Activated CD8-positive, alpha-beta T cell treated with anti-CD3 and anti-CD28 coated beads, Interleukin-2, amount 10 ng/mL, durations not matched to agents 7 days and 5 days (primary cell): ENCODE measurements at regions of chr1 and their contacts with region 1.

Region 1: GRCh38 chr1:223712194-223712849 is at the start of gene CAPN2:
- DNase-seq: peak; percentile 65
- ATAC-seq: peak; percentile 63
- H3K4me3 Mint-ChIP-seq: peak within 1 kb of the TSS; percentile 80
- H3K27ac Mint-ChIP-seq: peak within 1 kb of the TSS; percentile 88
- H3K4me1 Mint-ChIP-seq: peaks cover 51% of the 10 kb centered on the region
- H3K27me3 Mint-ChIP-seq: no peaks in the 10 kb centered on the region
- total RNA-seq, gene CAPN2: 176 to 178 TPM

Region 2: DNA sequence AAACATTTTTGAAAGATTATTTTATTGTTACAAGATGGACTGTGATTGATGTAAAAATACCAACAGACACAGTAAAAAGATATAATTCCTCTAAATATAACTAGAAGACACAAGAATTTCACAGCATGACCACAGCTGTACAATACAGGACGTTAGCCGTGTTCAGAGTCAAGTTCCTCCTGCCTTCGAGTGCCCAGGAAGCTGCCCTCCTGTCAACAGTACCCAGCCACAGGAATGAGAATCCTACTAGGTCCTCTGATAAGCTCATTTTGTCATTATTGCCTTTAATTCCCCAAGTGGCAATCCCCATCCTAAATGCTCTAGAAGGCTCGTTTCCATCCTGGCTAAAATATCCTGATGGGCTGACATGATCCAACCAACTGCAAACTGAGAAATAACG is 16.4 kb before region 1 on chr1:
- CTCF ChIA-PET with region 1: interaction called, 16 read pairs
- POLR2A ChIA-PET with region 1: interaction called, 3 read pairs
- DNase-seq: no peak
- ATAC-seq: no peak
- H3K4me3 Mint-ChIP-seq: no peak overlapping the region
- H3K27ac Mint-ChIP-seq: no peak overlapping the region
- H3K4me1 Mint-ChIP-seq: peaks cover 4% of the 10 kb centered on the region
- H3K27me3 Mint-ChIP-seq: peaks cover 2% of the 10 kb centered on the region

Region 3: DNA sequence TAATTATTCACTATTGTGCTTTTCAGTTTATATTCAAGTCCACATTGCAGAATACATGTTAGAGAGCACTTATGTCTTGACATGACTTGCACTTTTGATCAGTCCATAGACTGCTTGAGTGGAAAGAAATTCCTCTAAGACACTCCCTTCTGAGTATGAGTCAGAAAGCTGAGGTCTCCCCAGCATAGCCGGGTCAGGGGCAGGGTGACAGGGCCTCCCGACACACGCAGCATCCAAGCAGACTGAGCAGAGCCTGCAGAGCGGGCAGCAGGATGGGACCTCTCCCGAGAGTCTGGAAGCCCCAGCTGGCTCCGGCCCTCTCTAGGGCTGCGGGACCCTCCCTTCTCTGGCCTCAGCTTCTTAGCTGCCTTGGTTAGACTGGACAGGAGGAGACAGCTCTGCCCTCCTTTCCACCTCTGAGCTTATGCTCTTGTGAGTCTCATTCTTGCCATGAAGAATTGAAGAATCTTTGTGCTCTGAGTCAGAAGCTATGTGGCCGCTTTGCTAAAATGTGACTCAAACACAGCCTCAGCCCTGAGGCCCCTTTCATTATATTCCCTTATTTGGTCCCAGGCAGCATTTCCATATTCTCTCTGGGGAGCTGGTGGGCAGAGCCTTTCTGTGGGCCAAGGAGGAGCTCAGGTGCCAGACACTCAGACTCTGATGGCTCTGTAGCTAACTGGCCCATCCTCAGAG is 11.2 kb before region 1 on chr1:
- CTCF ChIA-PET with region 1: interaction called, 16 read pairs
- POLR2A ChIA-PET with region 1: interaction called, 3 read pairs
- DNase-seq: no peak
- ATAC-seq: no peak
- H3K4me3 Mint-ChIP-seq: no peak overlapping the region
- H3K27ac Mint-ChIP-seq: no peak overlapping the region
- H3K4me1 Mint-ChIP-seq: peaks cover 12% of the 10 kb centered on the region
- H3K27me3 Mint-ChIP-seq: peaks cover 3% of the 10 kb centered on the region

Region 4: GRCh38 chr1:223726380-223727001 is 14.2 kb after region 1 on chr1:
- CTCF ChIA-PET with region 1: interaction called, 21 read pairs
- POLR2A ChIA-PET with region 1: interaction called, 16 read pairs
- DNase-seq: peak; percentile 90
- ATAC-seq: peak; percentile 100
- H3K4me3 Mint-ChIP-seq: peak overlapping the region; percentile 75
- H3K27ac Mint-ChIP-seq: peak overlapping the region; percentile 95
- H3K4me1 Mint-ChIP-seq: peaks cover 71% of the 10 kb centered on the region
- H3K27me3 Mint-ChIP-seq: no peaks in the 10 kb centered on the region